Posterior vena cava (tissue), 2 donors: ENCODE measurements at regions of chr3 and their contacts with region 1.

Region 1: GRCh38 chr3:14915636-14916222 is 31.7 kb upstream of the NR2C2 start:
- DNase-seq: no peak

Region 2: DNA sequence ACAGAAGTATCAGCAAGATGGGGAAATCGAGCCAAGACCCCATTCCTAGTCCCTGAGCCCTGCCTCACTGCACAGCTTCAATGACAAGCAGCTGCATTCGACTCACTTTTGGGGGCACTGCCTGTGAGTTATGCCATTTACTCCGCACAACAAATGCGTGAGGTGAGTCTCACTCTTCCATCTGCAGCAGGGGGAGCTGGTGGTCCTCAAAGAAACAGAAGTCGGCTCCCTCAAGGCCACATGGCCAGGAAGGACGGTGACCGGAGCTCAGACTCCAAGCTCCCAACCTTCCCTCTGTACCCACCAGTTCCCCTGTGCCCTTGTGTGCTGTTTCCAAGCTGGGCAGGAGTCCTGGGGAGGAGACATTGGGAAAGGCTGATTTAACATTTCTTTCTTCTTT is 1714.8 kb before region 1 on chr3:
- intact Hi-C with region 1: no loop called
- DNase-seq: peak; percentile 72

Region 3: DNA sequence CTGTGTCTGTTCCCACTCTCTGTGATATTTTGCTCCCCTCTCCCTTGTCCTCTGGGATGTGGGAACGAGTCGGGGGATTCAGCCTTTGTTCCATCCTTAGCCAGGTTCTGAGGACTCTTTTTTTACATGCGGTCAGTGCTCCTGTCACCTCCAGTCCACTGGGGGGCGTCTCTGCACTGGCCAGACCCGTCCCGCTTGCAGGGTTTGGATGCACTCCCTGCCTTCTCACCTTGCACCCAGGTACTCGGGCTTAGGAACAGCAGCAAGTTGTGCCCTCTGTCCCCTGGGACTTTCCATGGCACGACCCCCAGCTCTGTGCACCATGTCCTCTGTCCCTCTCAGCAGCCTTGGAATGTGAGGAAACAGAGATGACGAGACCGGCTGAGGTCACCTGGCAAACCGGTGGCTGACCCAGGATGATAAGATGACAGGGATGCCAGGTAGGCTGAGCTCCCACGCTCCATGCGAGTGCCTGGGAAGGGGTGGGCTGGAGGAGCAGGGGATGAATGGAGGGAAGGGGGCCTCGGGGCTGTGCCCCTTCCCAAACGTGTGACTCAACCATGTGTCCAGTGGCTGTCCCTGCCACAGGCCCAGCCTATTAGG is 124.3 kb before region 1 on chr3:
- intact Hi-C with region 1: loop called (anchors 5 to 10 kb)
- DNase-seq: peak; percentile 87

Region 4: DNA sequence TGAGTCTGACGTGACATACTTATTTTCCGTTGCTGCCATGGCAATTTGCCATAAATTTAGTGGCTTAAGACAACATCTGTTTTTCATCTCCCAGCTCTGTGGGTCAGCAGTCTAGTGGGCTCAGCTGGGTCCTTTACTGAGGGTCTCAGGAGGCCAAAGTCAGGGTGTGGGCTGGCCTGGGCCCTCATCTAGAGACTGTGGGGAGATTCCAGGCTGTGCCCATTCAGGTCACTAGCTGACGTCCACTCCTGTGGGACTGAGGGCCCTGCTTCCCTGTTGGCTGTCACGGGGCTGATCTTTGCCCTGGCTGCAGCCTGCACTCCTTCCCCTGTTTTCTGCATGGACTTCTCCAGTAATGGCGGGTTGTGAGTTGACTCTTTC is 77.9 kb before region 1 on chr3:
- intact Hi-C with region 1: no loop called
- DNase-seq: peak; percentile 80

Region 5: DNA sequence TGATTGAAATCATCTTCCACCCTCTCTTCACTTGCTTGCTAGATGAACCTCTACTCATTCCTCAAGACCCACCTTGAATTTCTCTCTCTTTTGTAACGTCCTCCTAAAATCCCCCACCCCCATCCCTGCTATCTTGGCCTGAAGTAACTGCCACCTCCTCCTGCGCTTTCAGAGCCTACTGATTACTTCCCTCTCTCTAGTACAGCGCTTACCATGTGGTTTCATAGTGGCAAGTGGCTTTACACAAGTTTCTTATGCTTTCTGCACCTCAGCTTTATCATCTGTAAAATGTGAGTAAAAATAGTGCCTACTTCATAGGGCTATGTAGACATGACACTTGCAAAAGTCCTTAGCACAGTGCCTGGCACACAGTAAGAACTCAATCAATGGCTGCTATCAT is 1718.2 kb after region 1 on chr3:
- intact Hi-C with region 1: no loop called
- DNase-seq: no peak